Mammary epithelial cell (primary cell): ENCODE measurements at regions of chr16 and their contacts with region 1.

Region 1: GRCh38 chr16:58000706-58001676 is at the start of gene USB1:
- DNase-seq: peak; percentile 83
- H3K4me3 ChIP-seq: peak within 1 kb of the TSS; percentile 66 to 93 (median 85)
- H3K27ac ChIP-seq: peak within 1 kb of the TSS; percentile 49
- H3K4me1 ChIP-seq: peaks cover 33% of the 10 kb centered on the region
- H3K27me3 ChIP-seq: no peaks in the 10 kb centered on the region
- CTCF ChIP-seq: peak; percentile 19 to 64
- total RNA-seq, gene USB1: 36.2 to 61.1 TPM

Region 2: DNA sequence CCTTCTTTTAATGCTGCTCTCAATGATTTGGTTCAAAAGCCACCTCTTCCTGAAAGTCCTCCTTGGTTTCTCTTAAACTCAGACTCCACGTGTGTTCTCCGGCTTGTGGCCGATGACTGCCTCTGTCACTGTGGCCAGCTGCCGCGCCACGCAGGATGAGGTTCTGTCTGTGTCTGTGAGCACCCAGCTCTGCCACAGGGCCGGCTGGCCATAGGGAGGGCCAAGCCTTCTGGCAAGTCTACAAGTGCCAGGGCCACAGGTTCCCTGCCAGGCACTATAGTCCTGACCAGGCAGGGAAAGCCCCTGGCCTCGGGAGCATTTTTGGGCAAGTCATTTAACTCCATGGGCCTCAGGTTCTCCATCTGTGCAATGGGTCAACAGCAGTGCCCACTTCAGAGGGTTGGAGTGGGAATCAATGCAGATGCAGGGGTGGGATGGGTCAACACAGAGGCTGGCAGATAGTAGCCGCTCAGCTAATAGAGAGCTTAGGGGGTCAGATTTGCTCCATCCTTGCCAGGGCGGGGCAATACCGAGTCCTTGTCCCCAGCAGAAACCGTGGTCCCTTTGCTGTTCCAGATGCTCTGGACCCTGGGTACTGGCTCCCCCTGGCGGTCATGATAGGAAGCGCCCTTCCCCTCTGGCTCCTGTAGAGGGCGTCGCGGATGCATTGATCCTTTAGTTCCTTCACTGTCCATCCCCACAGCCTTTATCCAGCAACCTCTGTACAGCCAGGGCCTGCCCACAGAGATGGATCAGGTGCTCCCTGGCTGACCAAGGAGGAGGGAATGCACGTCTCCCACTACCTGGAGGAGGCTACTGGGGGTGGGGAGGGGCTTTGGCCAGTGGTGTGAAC is 352.2 kb before region 1 on chr16:
- CTCF ChIA-PET with region 1: no interaction called
- dilution Hi-C with region 1: no loop called
- in situ Hi-C with region 1: no loop called
- intact Hi-C with region 1: loop called (anchors 2 kb)
- DNase-seq: peak; percentile 70
- H3K4me3 ChIP-seq: no peak overlapping the region
- H3K27ac ChIP-seq: no peak overlapping the region
- H3K4me1 ChIP-seq: peaks cover 52% of the 10 kb centered on the region
- H3K27me3 ChIP-seq: no peaks in the 10 kb centered on the region
- CTCF ChIP-seq: peak; percentile 100

Region 3: DNA sequence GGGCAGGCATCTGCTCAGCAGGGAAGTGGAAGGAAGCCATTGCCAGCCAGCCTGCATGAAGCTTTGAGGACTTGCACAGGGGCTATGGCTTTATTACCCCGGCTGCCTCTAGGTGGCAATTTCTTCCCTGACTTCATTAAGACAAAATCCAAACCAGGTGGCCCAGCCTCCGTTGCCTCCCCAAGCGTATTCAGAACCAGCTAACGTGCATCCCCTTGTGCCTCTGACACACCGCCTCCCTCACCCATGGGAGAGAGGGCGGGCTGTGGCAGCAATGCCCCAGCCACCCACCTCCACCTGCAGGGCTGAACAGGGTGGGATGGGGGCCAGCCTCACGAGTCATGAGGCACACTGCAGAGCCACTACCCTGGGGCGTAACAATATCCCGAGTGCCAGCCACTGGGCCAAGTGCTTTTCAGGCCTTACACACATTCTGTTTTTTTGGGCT is 205.5 kb before region 1 on chr16:
- CTCF ChIA-PET with region 1: no interaction called
- dilution Hi-C with region 1: no loop called
- in situ Hi-C with region 1: loop called in 1 of 2 experiments (anchors 25 kb)
- intact Hi-C with region 1: loop called (anchors 2 kb)
- DNase-seq: peak; percentile 71
- H3K4me3 ChIP-seq: no peak overlapping the region
- H3K27ac ChIP-seq: no peak overlapping the region
- H3K4me1 ChIP-seq: peaks cover 36% of the 10 kb centered on the region
- H3K27me3 ChIP-seq: no peaks in the 10 kb centered on the region
- CTCF ChIP-seq: peak; percentile 37 to 70

Region 4: GRCh38 chr16:57906382-57907316 is 94.3 kb before region 1 on chr16:
- CTCF ChIA-PET with region 1: no interaction called
- dilution Hi-C with region 1: no loop called
- in situ Hi-C with region 1: loop called in 1 of 2 experiments (anchors 5 kb)
- intact Hi-C with region 1: loop called (anchors 2 kb)
- DNase-seq: no peak
- H3K4me3 ChIP-seq: no peak overlapping the region
- H3K27ac ChIP-seq: no peak overlapping the region
- H3K4me1 ChIP-seq: peaks cover 1% of the 10 kb centered on the region
- H3K27me3 ChIP-seq: no peaks in the 10 kb centered on the region
- CTCF ChIP-seq: peak; percentile 54 to 75

Region 5: DNA sequence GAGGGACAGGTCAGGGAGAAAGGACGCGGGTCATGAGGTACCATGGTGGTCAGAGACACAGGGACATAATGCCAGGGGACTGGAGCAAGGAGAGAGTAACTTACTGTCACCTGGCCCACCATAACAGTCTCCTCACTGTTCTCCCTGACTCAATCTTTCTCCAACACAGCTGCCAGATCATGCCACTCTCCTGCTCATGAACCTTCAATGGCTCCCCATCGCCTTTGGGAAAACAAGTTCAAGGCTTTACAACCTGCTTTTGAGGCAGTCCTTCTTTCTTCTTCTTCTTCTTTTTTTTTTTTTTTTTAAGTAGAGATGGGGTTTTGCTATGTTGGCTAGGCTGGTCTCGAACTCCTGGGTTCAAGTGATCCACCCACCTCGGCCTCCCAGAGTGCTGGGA is 53.0 kb before region 1 on chr16:
- CTCF ChIA-PET with region 1: no interaction called
- dilution Hi-C with region 1: no loop called
- in situ Hi-C with region 1: no loop called
- intact Hi-C with region 1: no loop called
- DNase-seq: no peak
- H3K4me3 ChIP-seq: no peak overlapping the region
- H3K27ac ChIP-seq: no peak overlapping the region
- H3K4me1 ChIP-seq: no peaks in the 10 kb centered on the region
- H3K27me3 ChIP-seq: no peaks in the 10 kb centered on the region
- CTCF ChIP-seq: no peak

Region 6: GRCh38 chr16:58046128-58046881 is 45.3 kb after region 1 on chr16:
- CTCF ChIA-PET with region 1: no interaction called
- dilution Hi-C with region 1: no loop called
- in situ Hi-C with region 1: no loop called
- intact Hi-C with region 1: no loop called
- DNase-seq: no peak
- H3K4me3 ChIP-seq: no peak overlapping the region
- H3K27ac ChIP-seq: no peak overlapping the region
- H3K4me1 ChIP-seq: no peaks in the 10 kb centered on the region
- H3K27me3 ChIP-seq: no peaks in the 10 kb centered on the region
- CTCF ChIP-seq: no peak

Region 7: GRCh38 chr16:58306327-58306726 is 305.3 kb after region 1 on chr16:
- CTCF ChIA-PET with region 1: no interaction called
- dilution Hi-C with region 1: no loop called
- in situ Hi-C with region 1: loop called in 1 of 2 experiments (anchors 25 kb)
- intact Hi-C with region 1: no loop called
- DNase-seq: peak; percentile 21
- H3K4me3 ChIP-seq: no peak overlapping the region
- H3K27ac ChIP-seq: no peak overlapping the region
- H3K4me1 ChIP-seq: no peaks in the 10 kb centered on the region
- H3K27me3 ChIP-seq: no peaks in the 10 kb centered on the region
- CTCF ChIP-seq: peak; percentile 46 to 69